Panc1 (cell line): ENCODE measurements at regions of chr5 and their contacts with region 1.

Region 1: GRCh38 chr5:171581781-171582180 is 162.3 kb downstream of the FGF18 start:
- DNase-seq: no peak
- ATAC-seq: no peak
- H3K4me3 ChIP-seq: no peak overlapping the region
- H3K27ac ChIP-seq: no peak overlapping the region
- H3K4me1 ChIP-seq: no peaks in the 10 kb centered on the region
- H3K27me3 ChIP-seq: peaks cover 5% of the 10 kb centered on the region; the same call in 1 of the 2 replicates
- CTCF ChIP-seq: no peak

Region 2: DNA sequence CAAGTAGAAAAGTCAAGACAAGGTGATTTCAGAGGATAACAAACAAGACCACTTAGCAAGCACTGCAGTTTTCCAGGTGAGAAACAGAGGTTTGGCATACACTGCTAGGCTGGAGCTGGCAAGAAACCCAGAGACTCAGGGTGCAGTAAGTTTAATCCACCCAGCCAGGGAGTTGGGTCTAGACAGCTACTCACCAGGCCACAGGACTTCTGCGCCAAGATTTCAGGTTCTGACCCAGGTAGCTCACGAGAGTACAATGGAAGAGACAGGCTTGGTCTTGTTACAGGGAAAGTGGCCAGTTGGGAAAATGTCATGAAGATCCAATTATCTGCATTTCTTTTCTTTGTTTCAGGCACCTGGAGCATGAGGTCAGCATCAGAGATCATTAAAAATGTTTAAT is 213.6 kb after region 1 on chr5:
- CTCF ChIA-PET with region 1: interaction called, 14 read pairs
- POLR2A ChIA-PET with region 1: no interaction called
- in situ Hi-C with region 1: no loop called
- intact Hi-C with region 1: no loop called
- DNase-seq: no peak
- ATAC-seq: no peak
- H3K4me3 ChIP-seq: no peak overlapping the region
- H3K27ac ChIP-seq: no peak overlapping the region
- H3K4me1 ChIP-seq: no peaks in the 10 kb centered on the region
- H3K27me3 ChIP-seq: 0 out of 2 replicates have a peak, but pooled peaks cover 2% of the 10 kb centered on the region
- CTCF ChIP-seq: no peak